WTC11 (cell line): ENCODE measurements at regions of chr5 and their contacts with region 1.

Region 1: GRCh38 chr5:176660860-176661641 is 13.8 kb downstream of the TSPAN17 start:
- DNase-seq: peak; percentile 89
- ATAC-seq: peak; percentile 83
- H3K4me3 Mint-ChIP-seq: no peak overlapping the region
- H3K27ac Mint-ChIP-seq: no peak overlapping the region
- H3K4me1 Mint-ChIP-seq: peaks cover 11% of the 10 kb centered on the region
- H3K27me3 Mint-ChIP-seq: no peaks in the 10 kb centered on the region
- CTCF ChIP-seq: peak; percentile 98

Region 2: DNA sequence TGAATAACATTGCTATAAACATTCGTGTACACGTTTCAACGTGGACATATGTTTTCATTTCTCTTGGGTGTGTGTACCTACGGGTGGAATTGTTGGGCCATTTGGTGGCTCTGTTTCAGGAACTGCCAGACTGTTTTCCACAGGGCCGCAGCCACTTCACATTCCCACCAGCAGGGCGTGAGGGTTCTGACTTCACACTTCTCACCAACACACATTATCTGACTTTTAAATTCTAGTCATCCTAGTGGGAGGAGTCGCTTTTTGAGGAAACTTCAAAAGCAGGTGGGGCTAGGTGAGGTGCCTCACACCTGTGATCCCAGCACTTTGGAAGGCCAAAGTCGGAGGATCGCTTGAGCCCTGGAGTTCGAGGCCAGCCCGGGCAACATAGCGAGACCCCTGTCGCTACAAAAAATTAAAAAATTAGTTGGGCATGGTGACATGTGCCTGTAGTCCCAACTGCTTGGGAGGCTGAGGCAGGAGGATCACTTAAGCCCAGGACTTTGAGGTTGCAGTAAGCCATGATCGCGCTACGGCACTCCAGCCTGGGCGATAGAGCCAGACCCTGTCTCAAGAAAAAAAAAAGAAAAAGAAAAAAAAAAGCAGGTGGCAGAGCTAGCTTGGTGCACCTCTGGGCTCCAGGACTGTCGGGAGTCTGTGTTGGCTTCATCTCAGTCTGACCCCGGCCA is 14.8 kb after region 1 on chr5:
- CTCF ChIA-PET with region 1: interaction called, 60 read pairs
- POLR2A ChIA-PET with region 1: interaction called, 3 read pairs
- DNase-seq: peak; percentile 72
- ATAC-seq: peak; percentile 51
- H3K4me3 Mint-ChIP-seq: no peak overlapping the region
- H3K27ac Mint-ChIP-seq: peak overlapping the region; percentile 67
- H3K4me1 Mint-ChIP-seq: peaks cover 37% of the 10 kb centered on the region
- H3K27me3 Mint-ChIP-seq: peaks cover 9% of the 10 kb centered on the region
- CTCF ChIP-seq: peak; percentile 51; the same call in 1 of the 2 replicates

Region 3: GRCh38 chr5:176739461-176740051 is 78.5 kb after region 1 on chr5:
- CTCF ChIA-PET with region 1: interaction called, 106 read pairs
- POLR2A ChIA-PET with region 1: interaction called, 3 read pairs
- DNase-seq: no peak
- ATAC-seq: peak; percentile 27
- H3K4me3 Mint-ChIP-seq: no peak overlapping the region
- H3K27ac Mint-ChIP-seq: no peak overlapping the region
- H3K4me1 Mint-ChIP-seq: peaks cover 57% of the 10 kb centered on the region
- H3K27me3 Mint-ChIP-seq: peaks cover 42% of the 10 kb centered on the region
- CTCF ChIP-seq: no peak

Region 4: GRCh38 chr5:176803940-176804498 is 143.0 kb after region 1 on chr5:
- CTCF ChIA-PET with region 1: interaction called, 19 read pairs
- POLR2A ChIA-PET with region 1: no interaction called
- DNase-seq: peak; percentile 75
- ATAC-seq: peak; percentile 68
- H3K4me3 Mint-ChIP-seq: no peak overlapping the region
- H3K27ac Mint-ChIP-seq: no peak overlapping the region
- H3K4me1 Mint-ChIP-seq: peaks cover 2% of the 10 kb centered on the region
- H3K27me3 Mint-ChIP-seq: peaks cover 33% of the 10 kb centered on the region
- CTCF ChIP-seq: no peak

Region 5: DNA sequence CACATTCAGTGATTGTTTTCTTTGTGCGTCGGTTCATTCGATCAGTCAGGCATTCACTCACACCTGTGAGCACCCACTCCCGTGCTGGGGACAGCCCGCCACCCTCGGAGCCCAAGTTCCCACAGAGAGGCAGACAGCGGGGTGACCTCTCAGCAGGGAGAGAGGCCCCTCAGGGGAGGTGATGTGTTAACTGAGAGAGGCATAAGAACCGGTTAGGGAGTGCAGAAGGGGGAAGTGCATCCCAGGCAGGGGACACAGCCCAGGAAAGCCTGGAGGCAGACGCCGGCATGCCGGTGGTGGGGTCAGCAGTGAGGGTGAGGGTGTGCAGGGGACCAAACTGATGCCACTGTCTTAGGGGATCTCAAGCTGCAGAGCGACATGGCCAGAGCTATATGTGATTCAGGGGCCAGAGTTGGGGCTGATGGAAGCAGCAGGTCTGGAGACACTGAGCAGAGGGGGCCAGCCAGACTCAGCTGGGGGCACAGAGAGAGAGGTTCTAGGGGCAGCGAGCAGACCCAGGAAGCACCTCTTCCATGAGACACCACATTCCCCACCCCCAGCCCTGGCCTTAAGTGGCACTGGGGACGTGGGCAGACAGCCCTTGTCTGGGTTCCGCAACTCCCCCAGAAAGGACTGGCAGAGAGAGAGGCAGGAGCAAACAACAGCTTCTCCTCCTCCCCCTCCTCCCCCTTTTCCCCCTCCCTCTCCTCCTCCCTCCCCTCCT is 202.2 kb after region 1 on chr5:
- CTCF ChIA-PET with region 1: interaction called, 30 read pairs
- POLR2A ChIA-PET with region 1: no interaction called
- DNase-seq: no peak
- ATAC-seq: peak; percentile 12; the same call in 1 of the 2 replicates
- H3K4me3 Mint-ChIP-seq: peak overlapping the region; percentile 40
- H3K27ac Mint-ChIP-seq: peak overlapping the region; percentile 79
- H3K4me1 Mint-ChIP-seq: peaks cover 30% of the 10 kb centered on the region
- H3K27me3 Mint-ChIP-seq: no peaks in the 10 kb centered on the region; the same call in 1 of the 2 replicates
- CTCF ChIP-seq: no peak

Region 6: DNA sequence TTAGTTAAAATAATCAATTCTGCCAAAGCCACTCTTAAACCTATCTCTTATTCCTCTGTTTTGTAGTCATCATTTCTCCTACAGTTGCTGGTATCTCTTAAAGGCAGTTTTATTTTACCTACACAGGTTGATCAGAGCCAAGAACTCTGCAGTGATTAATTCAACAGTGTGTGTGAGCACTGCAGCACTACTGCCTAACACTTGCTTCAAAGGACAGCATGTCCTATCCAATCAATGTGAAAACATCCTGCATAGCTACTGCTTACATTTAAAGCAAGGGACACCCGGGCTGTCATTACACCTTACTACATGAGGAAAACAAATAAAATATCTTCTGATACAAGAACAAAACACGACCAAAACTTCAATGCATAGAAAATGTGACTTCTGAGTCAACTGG is 283.2 kb after region 1 on chr5:
- CTCF ChIA-PET with region 1: interaction called, 22 read pairs
- POLR2A ChIA-PET with region 1: no interaction called
- DNase-seq: no peak
- ATAC-seq: peak; percentile 83
- H3K4me3 Mint-ChIP-seq: peak overlapping the region; percentile 28
- H3K27ac Mint-ChIP-seq: peak overlapping the region; percentile 94
- H3K4me1 Mint-ChIP-seq: peaks cover 56% of the 10 kb centered on the region
- H3K27me3 Mint-ChIP-seq: no peaks in the 10 kb centered on the region
- CTCF ChIP-seq: no peak